Ascending aorta (tissue), 2 donors: ENCODE measurements at regions of chr1 and their contacts with region 1.

Region 1: GRCh38 chr1:235504496-235505222 is 407 bp upstream of the B3GALNT2 start:
- DNase-seq: peak; percentile 94 to 100
- H3K4me3 ChIP-seq: peak overlapping the region; percentile 75 to 94
- H3K27ac ChIP-seq: peak overlapping the region; percentile 98 to 99
- H3K4me1 ChIP-seq: peaks cover 0 to 20% of the 10 kb centered on the region in 2 donors
- H3K27me3 ChIP-seq: no peaks in the 10 kb centered on the region
- CTCF ChIP-seq: peak; percentile 82 to 95 (median 94)

Region 2: DNA sequence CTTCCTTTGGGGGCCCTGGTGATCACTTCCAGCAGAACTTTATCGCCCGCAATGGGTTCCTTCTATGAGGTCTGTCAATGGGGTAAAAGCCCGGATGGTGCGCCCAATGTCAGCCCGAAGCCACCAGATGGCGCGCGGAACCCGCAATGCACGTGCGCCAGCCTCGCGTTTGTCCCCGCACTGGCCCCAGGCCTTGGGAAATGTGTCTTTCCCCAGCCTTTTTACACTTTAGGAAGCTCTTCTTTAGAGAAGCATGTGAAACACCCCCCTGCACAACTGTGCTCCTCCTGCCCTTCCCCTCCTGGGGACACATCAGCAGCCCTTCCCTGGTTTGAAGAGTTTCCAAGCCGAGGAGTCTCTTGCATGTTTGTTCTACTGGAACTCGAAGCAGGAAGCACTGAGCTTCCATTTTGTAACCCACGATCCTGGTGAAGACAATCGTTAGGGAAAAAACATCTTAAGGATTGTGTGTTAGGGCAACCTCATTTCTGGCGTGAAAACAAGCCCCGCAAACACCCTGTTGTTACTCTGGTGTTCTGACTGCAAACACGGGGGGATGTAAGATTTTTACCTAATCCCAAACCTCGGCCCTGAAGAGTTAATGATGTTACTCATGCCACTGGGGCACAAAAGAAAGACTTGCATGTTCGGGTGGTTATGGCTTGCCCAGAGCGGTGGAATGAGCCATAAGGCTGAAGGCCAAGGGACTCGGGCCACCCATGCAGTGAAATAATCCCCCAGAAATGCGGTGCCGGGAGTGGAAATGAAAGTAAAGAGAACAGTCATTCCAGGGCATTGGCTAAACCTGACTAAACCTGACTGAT is 1005.3 kb before region 1 on chr1:
- intact Hi-C with region 1: loop called (anchors 5 kb)
- DNase-seq: peak; percentile 71 to 96
- H3K4me3 ChIP-seq: peak overlapping the region; percentile 17 to 49
- H3K27ac ChIP-seq: peak overlapping the region; percentile 85 to 95
- H3K4me1 ChIP-seq: peaks cover 8 to 30% of the 10 kb centered on the region in 2 donors
- H3K27me3 ChIP-seq: no peaks in the 10 kb centered on the region
- CTCF ChIP-seq: peak; percentile 94 to 97 (median 94)

Region 3: GRCh38 chr1:235328357-235329138 is 176.1 kb before region 1 on chr1 and contains the start of gene GGPS1:
- intact Hi-C with region 1: loop called (anchors 1 kb)
- DNase-seq: peak; percentile 93 to 99
- H3K4me3 ChIP-seq: peak within 1 kb of the TSS; percentile 66 to 98
- H3K27ac ChIP-seq: peak within 1 kb of the TSS; percentile 95 to 100
- H3K4me1 ChIP-seq: peaks cover 9 to 43% of the 10 kb centered on the region in 2 donors
- H3K27me3 ChIP-seq: no peaks in the 10 kb centered on the region
- CTCF ChIP-seq: no peak
- total RNA-seq, gene GGPS1: 7.2 TPM

Region 4: DNA sequence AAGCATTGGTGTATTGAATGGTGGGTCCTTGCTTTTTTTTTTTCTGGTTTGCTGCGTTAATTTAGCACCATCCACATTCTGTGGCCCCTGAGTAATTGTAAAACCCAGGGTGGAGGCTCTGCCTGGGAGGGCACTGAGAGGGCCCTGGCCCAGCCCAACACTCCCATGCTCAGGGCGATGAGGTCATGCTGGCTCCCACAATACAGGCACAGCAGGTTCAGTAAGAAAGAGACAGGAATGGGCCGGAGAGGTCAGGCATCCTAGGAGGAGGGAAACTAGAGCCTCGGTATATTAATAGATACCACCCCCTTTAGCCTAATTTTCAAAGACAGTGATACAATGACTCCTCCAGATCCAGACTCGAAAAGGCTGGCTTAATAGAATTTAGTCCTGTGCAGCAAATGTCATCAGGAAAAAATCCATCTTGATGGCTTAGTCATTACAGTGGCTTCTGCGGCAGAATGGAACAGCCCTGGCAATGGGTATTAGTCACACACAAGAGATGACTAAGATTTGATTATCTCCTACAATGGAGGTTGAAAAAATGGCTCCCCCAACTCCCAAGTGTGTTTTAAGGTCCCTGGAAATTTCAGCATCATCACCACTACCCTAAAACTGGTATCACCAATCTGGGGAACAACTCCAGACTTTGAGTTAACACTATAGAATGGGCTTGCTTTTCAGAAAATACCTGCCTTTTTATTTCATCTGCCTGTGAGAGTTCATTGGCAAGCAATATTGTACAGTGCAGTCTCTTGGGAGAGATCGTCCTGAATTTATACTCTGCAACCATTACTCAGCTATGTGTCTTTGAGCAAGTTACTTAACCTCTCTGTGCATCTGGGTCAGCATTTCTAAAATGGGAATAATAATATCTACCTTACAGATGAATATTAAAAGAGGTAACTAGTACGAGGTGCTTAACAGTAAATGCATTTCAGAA is 406.0 kb after region 1 on chr1:
- intact Hi-C with region 1: loop called (anchors 5 kb)
- DNase-seq: peak in 1 of 2 donors; percentile 78
- H3K4me3 ChIP-seq: no peak overlapping the region
- H3K27ac ChIP-seq: peak overlapping the region; percentile 82 to 83
- H3K4me1 ChIP-seq: peaks cover 9 to 15% of the 10 kb centered on the region in 2 donors
- H3K27me3 ChIP-seq: no peaks in the 10 kb centered on the region
- CTCF ChIP-seq: no peak

Region 5: GRCh38 chr1:236281654-236282424 is 777.2 kb after region 1 on chr1 and contains the start of gene ERO1B:
- intact Hi-C with region 1: loop called (anchors 2 kb)
- DNase-seq: peak; percentile 94 to 99
- H3K4me3 ChIP-seq: peak within 1 kb of the TSS; percentile 80 to 98
- H3K27ac ChIP-seq: peak within 1 kb of the TSS; percentile 71 to 89
- H3K4me1 ChIP-seq: peaks cover 0 to 4% of the 10 kb centered on the region in 2 donors
- H3K27me3 ChIP-seq: no peaks in the 10 kb centered on the region
- CTCF ChIP-seq: no peak
- total RNA-seq, gene ERO1B: 5.1 TPM

Region 6: GRCh38 chr1:236301080-236301957 is 796.7 kb after region 1 on chr1:
- intact Hi-C with region 1: no loop called
- DNase-seq: no peak
- H3K4me3 ChIP-seq: no peak overlapping the region
- H3K27ac ChIP-seq: no peak overlapping the region
- H3K4me1 ChIP-seq: no peaks in the 10 kb centered on the region
- H3K27me3 ChIP-seq: no peaks in the 10 kb centered on the region
- CTCF ChIP-seq: no peak